ENCODE measurements at regions of chr10 and their contacts with region 1.

Region 1: GRCh38 chr10:102225646-102226541 is at the start of gene ELOVL3:
- DNase-seq: peak; percentile 94 to 98
- ATAC-seq: peak; percentile 88 to 94
- H3K4me3 ChIP-seq: peak within 1 kb of the TSS; percentile 36
- H3K27ac ChIP-seq: peak within 1 kb of the TSS; percentile 55 to 56
- H3K4me1 ChIP-seq: peaks cover 17% of the 10 kb centered on the region; the same call in 2 of the 3 replicates
- CTCF ChIP-seq: no peak
- EP300 ChIP-seq: no peak
- POLR2A ChIP-seq: peak; percentile 23; the same call in 1 of the 2 replicates
- RAD21 ChIP-seq: no peak
- polyA plus RNA-seq, gene ELOVL3: 0.53 and 0.86 TPM in 2 replicates

Region 2: DNA sequence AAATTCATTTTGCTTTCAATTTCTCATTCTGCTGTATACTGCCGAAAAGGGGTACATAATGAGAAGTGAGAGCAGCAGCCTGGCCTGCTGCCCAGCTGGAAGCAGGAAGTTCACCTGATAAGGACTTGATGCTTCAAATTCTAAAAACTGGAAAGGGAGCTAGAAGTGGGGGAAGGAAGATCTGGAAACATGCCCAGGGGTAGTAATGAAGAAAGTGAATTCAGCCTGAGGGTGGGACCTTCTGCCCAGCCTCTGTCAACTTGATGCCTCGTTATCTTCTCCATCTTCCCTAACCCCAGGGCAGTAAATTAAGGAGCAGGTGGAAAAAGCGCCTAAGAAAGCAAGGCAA is 239.3 kb before region 1 on chr10:
- CTCF ChIA-PET with region 1: no interaction called
- POLR2A ChIA-PET with region 1: no interaction called
- DNase-seq: no peak
- ATAC-seq: no peak
- H3K4me3 ChIP-seq: no peak overlapping the region
- H3K27ac ChIP-seq: no peak overlapping the region
- H3K4me1 ChIP-seq: no peaks in the 10 kb centered on the region
- CTCF ChIP-seq: no peak
- EP300 ChIP-seq: no peak
- POLR2A ChIP-seq: no peak
- RAD21 ChIP-seq: no peak

Region 3: GRCh38 chr10:102045292-102045691 is 180.6 kb before region 1 on chr10:
- CTCF ChIA-PET with region 1: no interaction called
- POLR2A ChIA-PET with region 1: no interaction called
- DNase-seq: no peak
- ATAC-seq: no peak
- H3K4me3 ChIP-seq: no peak overlapping the region
- H3K27ac ChIP-seq: no peak overlapping the region
- H3K4me1 ChIP-seq: no peaks in the 10 kb centered on the region
- CTCF ChIP-seq: no peak
- EP300 ChIP-seq: no peak
- POLR2A ChIP-seq: no peak
- RAD21 ChIP-seq: no peak

Region 4: DNA sequence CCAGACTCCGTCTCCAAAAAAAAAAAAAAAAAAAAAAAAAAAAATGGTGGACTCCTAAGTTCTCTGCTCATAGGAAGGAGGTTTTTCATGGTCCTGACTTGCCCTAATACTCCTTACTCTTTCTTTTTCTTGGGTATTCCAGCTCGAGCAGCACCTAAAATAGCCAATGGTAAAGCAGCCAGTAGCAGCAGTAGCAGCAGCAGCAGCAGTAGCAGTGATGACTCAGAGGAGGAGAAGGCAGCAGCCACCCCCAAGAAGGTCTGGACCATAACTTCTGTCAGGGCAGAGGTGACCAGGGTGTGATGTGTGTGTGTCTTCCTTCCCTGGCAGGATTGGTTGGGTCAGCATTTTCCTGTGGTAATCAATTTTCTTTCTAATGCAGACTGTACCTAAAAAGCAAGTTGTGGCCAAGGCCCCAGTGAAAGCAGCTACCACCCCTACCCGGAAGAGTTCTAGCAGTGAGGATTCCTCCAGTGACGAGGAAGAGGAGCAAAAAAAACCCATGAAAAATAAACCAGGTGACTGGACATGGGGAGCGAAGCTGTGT is 66.8 kb before region 1 on chr10:
- CTCF ChIA-PET with region 1: interaction called, 28 read pairs
- POLR2A ChIA-PET with region 1: no interaction called
- DNase-seq: no peak
- ATAC-seq: no peak; a peak in 2 of 6 replicates
- H3K4me3 ChIP-seq: no peak overlapping the region
- H3K27ac ChIP-seq: no peak overlapping the region
- H3K4me1 ChIP-seq: peaks cover 4% of the 10 kb centered on the region; the same call in 2 of the 3 replicates
- CTCF ChIP-seq: no peak
- EP300 ChIP-seq: no peak
- POLR2A ChIP-seq: no peak
- RAD21 ChIP-seq: no peak

Region 5: GRCh38 chr10:102208311-102209035 is 17.4 kb before region 1 on chr10:
- CTCF ChIA-PET with region 1: interaction called, 11 read pairs
- POLR2A ChIA-PET with region 1: interaction called, 3 read pairs
- DNase-seq: no peak
- ATAC-seq: no peak
- H3K4me3 ChIP-seq: no peak overlapping the region
- H3K27ac ChIP-seq: no peak overlapping the region
- H3K4me1 ChIP-seq: no peaks in the 10 kb centered on the region
- CTCF ChIP-seq: no peak
- EP300 ChIP-seq: no peak
- POLR2A ChIP-seq: no peak
- RAD21 ChIP-seq: no peak

Region 6: GRCh38 chr10:102280397-102281101 is 54.7 kb after region 1 on chr10:
- CTCF ChIA-PET with region 1: interaction called, 17 read pairs
- POLR2A ChIA-PET with region 1: no interaction called
- DNase-seq: no peak
- ATAC-seq: peak in 1 of 2 experiments; percentile 40; a peak in 3 of 6 replicates
- H3K4me3 ChIP-seq: no peak overlapping the region
- H3K27ac ChIP-seq: no peak overlapping the region
- H3K4me1 ChIP-seq: no peaks in the 10 kb centered on the region
- CTCF ChIP-seq: no peak
- EP300 ChIP-seq: no peak
- POLR2A ChIP-seq: no peak
- RAD21 ChIP-seq: no peak

Region 7: DNA sequence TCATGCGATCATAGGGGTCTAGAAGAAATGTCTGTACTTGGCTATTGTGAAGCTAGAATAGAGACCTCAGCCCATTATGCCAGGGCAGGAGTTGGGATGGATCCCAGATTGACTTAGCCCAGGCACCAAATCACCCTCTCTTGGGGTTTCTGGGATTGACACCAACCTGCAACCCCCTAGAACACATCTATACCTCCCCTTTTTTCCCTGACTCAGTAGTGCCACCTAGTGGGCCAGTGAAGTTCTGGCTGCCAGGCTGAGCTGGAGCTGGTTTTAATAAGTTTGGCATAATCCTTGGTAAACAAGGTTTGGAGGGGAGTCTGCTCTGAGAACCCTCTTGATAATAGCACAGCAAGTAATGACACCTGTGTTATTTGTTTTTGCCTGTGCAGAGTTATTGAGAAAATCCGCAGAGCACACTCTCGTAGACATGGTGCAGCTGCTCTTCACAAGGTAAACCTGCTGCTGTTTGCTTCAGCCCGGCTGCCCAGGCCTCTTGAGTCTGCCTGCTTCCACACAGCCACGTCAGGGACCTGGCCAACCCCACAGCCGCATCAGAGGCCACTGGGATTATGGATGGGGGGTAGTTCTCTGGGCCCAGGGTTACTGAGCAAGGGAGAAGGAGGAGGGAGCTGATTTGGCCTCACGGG is 126.3 kb after region 1 on chr10:
- CTCF ChIA-PET with region 1: interaction called, 886 read pairs
- POLR2A ChIA-PET with region 1: interaction called, 3 read pairs
- DNase-seq: peak; percentile 68
- ATAC-seq: peak; percentile 72 to 89; a peak in 5 of 6 replicates
- H3K4me3 ChIP-seq: no peak overlapping the region
- H3K27ac ChIP-seq: no peak overlapping the region
- H3K4me1 ChIP-seq: no peaks in the 10 kb centered on the region
- CTCF ChIP-seq: peak; percentile 93
- EP300 ChIP-seq: no peak
- POLR2A ChIP-seq: no peak
- RAD21 ChIP-seq: peak; percentile 75 to 80

Region 8: DNA sequence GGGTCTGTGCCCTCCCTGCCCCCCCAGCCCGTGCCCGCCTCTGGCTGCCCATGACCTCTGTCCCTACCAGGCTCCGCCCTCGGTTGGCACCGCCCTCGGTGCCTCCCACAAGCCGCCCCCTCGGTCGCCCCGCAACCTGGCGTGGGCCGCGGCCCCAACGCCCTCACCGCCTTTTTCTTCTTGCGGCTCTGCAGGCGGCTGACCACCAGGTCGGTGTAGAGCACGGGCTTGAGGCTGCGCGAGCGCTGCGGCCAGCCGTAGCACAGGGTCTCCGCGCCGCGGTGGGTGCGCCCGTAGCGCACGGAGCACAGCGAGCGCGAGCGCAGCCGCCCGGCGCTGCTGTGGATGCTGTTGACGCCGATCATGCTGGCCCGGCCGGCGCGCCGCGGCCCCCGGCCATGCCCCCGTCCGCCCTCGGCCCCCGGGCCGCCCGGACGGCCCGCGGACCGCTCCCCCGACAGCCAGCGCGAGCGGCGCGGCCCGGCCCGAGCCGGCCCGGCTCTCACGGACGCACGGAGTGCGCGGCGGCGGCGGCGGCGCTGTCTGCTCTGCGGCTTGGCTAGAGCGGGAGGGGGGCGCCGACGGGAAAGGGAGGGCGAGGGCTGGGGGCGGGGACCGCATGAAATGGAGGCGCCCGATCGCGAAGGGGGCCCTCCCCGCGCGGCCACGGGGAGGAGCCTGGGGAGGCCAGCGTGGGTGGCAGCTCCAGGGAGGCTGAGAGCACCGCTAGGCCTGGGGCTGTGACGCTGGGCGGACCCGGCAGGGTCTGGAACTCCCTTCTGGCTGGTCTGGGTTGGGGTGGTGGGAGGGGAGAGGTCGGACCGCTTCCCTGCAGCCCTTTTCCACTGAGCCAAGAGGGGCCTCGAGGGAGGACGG is 183.1 kb after region 1 on chr10:
- CTCF ChIA-PET with region 1: interaction called, 450 read pairs
- POLR2A ChIA-PET with region 1: no interaction called
- DNase-seq: no peak
- ATAC-seq: peak; percentile 9 to 15; a peak in 4 of 6 replicates
- H3K4me3 ChIP-seq: peak overlapping the region; percentile 65
- H3K27ac ChIP-seq: peak overlapping the region; percentile 36 to 73; a peak in 4 of 6 replicates
- H3K4me1 ChIP-seq: peaks cover 3% of the 10 kb centered on the region; the same call in 1 of the 3 replicates
- CTCF ChIP-seq: no peak
- EP300 ChIP-seq: no peak
- POLR2A ChIP-seq: no peak
- RAD21 ChIP-seq: no peak

Measured in A549 (cell line).